Heart left ventricle (tissue), 16 donors: ENCODE measurements at regions of chr7 and their contacts with region 1.

Region 1: GRCh38 chr7:27576360-27576944 is 86.2 kb downstream of the HIBADH start:
- DNase-seq: no peak
- ATAC-seq: peak in 2 of 4 donors; percentile 48 to 62
- H3K4me3 ChIP-seq: no peak overlapping the region
- H3K27ac ChIP-seq: no peak overlapping the region
- H3K4me1 ChIP-seq: no peaks in the 10 kb centered on the region
- H3K27me3 ChIP-seq: no peaks in the 10 kb centered on the region
- CTCF ChIP-seq: peak; percentile 48 to 77 (median 66)
- POLR2A ChIP-seq: no peak

Region 2: GRCh38 chr7:27204851-27205337 is 371.6 kb before region 1 on chr7:
- intact Hi-C with region 1: loop called in 9 of 10 experiments (anchors 5 to 10 kb)
- DNase-seq: no peak
- ATAC-seq: no peak
- H3K4me3 ChIP-seq: peak overlapping the region in 1 of 12 donors; percentile 34
- H3K27ac ChIP-seq: peak overlapping the region in 1 of 12 donors; percentile 21
- H3K4me1 ChIP-seq: peaks cover 0 to 39% (median 16%) of the 10 kb centered on the region in 12 donors
- H3K27me3 ChIP-seq: peaks cover 61 to 99% (median 94%) of the 10 kb centered on the region in 9 donors
- CTCF ChIP-seq: no peak
- POLR2A ChIP-seq: no peak